Mammary epithelial cell (primary cell): ENCODE measurements at regions of chr19 and their contacts with region 1.

Region 1: DNA sequence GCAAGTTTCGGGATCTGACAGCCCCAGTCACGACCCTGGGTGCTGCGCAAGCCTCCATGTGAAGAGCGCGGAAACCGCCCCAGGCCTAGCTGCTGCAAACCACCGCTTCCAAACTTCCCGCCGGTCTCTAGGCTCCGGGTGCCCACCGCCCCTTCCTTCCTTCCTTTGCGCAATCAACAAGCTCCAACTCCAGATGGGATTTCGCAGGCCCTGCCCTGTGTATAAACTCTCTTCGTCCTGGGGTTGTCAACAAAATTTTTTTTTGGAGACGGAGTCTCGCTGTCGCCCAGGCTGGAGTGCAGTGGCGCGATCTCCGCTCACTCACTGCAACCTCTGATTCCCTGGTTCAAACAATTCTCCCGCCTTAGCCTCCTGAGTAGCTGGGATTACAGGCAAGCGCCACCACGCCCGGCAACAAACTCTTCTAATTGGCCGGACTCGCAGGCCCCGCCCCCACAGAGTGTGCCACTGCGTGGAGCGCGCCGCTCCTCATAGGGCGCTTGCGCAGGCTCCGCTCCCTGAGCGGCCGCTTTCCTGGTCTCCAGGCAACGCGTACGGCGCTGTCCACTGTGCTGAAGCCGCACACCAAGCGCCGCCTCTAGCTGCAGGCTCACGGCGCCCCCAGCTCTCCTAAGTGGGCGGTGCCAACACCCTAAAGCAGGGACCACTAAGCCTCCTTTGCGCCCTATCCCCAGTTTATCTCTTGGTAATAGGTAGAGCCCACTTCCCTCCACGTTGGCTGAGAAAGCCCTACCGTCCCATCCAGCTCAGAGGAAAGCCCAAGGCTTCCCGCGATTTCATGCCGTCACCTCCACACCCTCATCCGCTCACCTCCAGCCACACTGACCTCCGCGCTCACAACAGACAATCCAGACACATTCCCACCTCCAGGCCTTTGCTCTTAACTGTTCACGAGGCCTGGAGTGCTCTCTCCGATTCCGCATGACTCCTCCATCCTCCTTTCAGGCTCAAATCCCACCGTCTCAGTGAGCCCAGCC is 5.5 kb upstream of the QTRT1 start:
- DNase-seq: peak; percentile 93
- H3K4me3 ChIP-seq: no peak overlapping the region
- H3K27ac ChIP-seq: no peak overlapping the region
- H3K4me1 ChIP-seq: no peaks in the 10 kb centered on the region
- H3K27me3 ChIP-seq: no peaks in the 10 kb centered on the region
- CTCF ChIP-seq: no peak

Region 2: DNA sequence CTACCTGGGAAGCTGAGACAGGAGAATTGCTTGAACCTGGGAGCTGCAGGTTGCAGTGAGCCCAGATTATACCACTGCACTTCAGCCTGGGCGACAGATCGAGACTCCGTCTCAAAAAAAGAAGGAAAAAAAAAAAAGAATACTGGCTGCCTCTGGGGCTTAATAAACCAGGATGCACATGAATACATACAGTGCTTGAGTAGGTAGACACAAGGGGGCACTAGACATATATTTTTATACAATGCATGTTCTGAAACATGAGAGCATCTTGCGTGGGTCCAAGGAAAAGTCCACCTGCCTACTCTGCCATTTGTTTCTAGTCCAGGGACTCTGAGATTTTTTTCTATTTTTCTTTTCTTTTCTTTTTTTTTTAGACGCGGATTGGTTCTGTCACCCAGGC is 223.8 kb before region 1 on chr19:
- CTCF ChIA-PET with region 1: no interaction called
- dilution Hi-C with region 1: no loop called
- in situ Hi-C with region 1: no loop called
- intact Hi-C with region 1: loop called (anchors 1 kb)
- DNase-seq: peak; percentile 28
- H3K4me3 ChIP-seq: no peak overlapping the region
- H3K27ac ChIP-seq: no peak overlapping the region
- H3K4me1 ChIP-seq: no peaks in the 10 kb centered on the region
- H3K27me3 ChIP-seq: no peaks in the 10 kb centered on the region
- CTCF ChIP-seq: peak; percentile 44 to 50

Region 3: GRCh38 chr19:10565567-10566407 is 129.9 kb before region 1 on chr19 and contains the start of gene KRI1:
- CTCF ChIA-PET with region 1: interaction called, 4 read pairs
- dilution Hi-C with region 1: no loop called
- in situ Hi-C with region 1: no loop called
- intact Hi-C with region 1: loop called (anchors 1 kb)
- DNase-seq: peak; percentile 94
- H3K4me3 ChIP-seq: peak within 1 kb of the TSS; percentile 90 to 95 (median 92)
- H3K27ac ChIP-seq: peak within 1 kb of the TSS; percentile 53
- H3K4me1 ChIP-seq: peaks cover 39% of the 10 kb centered on the region
- H3K27me3 ChIP-seq: no peaks in the 10 kb centered on the region
- CTCF ChIP-seq: peak; percentile 16 to 42
- total RNA-seq, gene KRI1: 10.3 to 32.7 TPM

Region 4: DNA sequence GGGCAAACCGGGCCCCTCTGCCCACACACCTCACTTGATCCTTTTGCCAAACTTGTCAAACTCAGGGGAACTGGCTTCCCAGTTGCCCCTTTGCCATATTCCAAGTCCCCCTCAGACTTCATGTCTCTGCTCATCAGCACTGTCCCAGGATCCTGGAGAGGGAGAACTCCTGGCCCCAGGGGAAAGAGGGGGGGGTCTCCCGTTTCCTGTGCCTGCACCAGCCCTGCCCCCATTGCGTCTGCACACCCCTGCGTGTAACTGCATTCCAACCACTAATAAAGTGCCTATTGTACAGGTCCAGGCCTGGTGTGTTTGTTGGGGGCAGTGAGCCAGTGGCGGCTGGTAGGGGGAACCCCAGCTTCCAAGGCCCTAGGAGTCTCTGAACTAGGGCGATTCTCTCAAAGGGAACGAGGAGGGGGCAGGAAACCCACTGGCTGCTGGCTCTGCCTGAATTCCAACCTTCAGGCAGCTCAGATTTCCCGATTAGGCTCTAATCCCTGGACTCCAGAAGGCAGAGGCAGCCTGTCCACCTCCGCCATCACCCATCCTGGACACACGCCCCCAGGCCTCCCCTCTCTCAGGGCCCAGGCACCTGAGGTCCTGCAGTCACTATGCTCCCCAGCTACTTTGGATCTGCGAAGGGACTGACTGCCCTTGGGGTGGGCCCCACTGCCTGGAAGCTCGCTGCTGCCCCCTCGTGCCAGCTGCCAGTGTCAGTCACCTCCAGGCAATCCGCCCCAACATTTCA is 51.3 kb before region 1 on chr19:
- CTCF ChIA-PET with region 1: interaction called, 20 read pairs
- dilution Hi-C with region 1: loop called (anchors 5 kb)
- in situ Hi-C with region 1: no loop called
- intact Hi-C with region 1: no loop called
- DNase-seq: peak; percentile 59
- H3K4me3 ChIP-seq: no peak overlapping the region
- H3K27ac ChIP-seq: no peak overlapping the region
- H3K4me1 ChIP-seq: peaks cover 14% of the 10 kb centered on the region
- H3K27me3 ChIP-seq: no peaks in the 10 kb centered on the region
- CTCF ChIP-seq: peak; percentile 81 to 91

Region 5: GRCh38 chr19:10717356-10718204 is 21.9 kb after region 1 on chr19 and contains the start of gene DNM2:
- CTCF ChIA-PET with region 1: interaction called, 16 read pairs
- dilution Hi-C with region 1: no loop called
- in situ Hi-C with region 1: no loop called
- intact Hi-C with region 1: no loop called
- DNase-seq: peak; percentile 100
- H3K4me3 ChIP-seq: peak within 1 kb of the TSS; percentile 63 to 99 (median 97)
- H3K27ac ChIP-seq: peak within 1 kb of the TSS; percentile 31
- H3K4me1 ChIP-seq: peaks cover 12% of the 10 kb centered on the region
- H3K27me3 ChIP-seq: no peaks in the 10 kb centered on the region
- CTCF ChIP-seq: peak; percentile 82 to 88
- total RNA-seq, gene DNM2: 95.9 to 125 TPM

Region 6: DNA sequence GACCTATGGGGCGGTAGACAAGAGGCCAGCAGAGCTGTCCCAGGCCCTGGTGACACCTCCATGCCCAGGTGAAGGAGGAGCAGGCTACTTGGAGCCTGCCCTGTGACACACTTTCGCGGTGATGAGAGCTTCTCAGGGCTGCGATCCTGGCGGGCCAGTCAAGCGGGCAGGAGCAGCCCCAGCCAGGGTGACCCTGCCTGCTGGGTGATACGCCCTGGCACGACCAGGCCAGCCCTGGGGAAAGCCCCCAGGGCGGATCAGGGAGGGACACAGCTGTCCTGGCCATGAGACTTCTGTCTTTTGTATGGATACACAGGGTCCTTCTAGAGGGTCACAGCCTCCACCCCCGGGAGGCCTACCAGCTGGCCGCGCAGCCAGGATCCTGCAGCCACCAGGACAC is 35.2 kb after region 1 on chr19:
- CTCF ChIA-PET with region 1: no interaction called
- dilution Hi-C with region 1: no loop called
- in situ Hi-C with region 1: no loop called
- intact Hi-C with region 1: no loop called
- DNase-seq: no peak
- H3K4me3 ChIP-seq: no peak overlapping the region
- H3K27ac ChIP-seq: no peak overlapping the region
- H3K4me1 ChIP-seq: no peaks in the 10 kb centered on the region
- H3K27me3 ChIP-seq: no peaks in the 10 kb centered on the region
- CTCF ChIP-seq: no peak

Region 7: DNA sequence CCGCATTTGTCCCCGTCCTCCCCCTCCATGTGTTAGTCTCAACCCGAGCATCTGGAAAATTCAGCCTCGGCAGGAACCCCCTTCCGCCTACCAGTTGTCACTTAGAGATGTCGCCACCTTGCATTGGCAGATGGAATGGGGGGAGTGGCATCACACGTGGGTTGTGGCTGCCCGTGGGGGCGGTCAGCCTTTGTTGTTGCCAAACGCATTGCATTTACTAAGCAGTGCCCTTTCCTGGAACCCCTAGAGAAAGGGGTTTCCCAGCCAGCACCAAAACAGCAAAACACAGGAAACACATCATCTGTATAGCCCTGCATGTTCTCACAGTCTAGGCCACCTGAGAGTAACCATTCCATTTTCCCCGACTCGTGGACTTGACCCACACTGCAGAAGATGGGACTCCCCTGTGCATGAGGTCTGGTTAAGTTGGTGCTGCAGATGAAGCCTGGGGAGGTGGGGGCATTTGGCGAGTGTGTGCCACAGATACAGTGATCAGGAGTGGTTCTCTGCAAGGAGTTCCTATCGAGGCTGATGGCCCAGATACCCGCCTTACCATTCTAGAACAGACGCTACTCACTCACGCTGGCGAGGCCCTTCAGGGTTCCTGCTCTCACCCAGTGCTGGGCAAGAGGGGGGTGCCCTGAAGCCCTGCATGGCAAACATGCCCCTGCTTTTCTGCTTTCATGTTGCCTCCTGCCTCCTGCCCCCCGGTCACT is 102.0 kb after region 1 on chr19:
- CTCF ChIA-PET with region 1: no interaction called
- dilution Hi-C with region 1: no loop called
- in situ Hi-C with region 1: no loop called
- intact Hi-C with region 1: no loop called
- DNase-seq: no peak
- H3K4me3 ChIP-seq: no peak overlapping the region
- H3K27ac ChIP-seq: no peak overlapping the region
- H3K4me1 ChIP-seq: no peaks in the 10 kb centered on the region
- H3K27me3 ChIP-seq: no peaks in the 10 kb centered on the region
- CTCF ChIP-seq: no peak

Region 8: GRCh38 chr19:10820173-10820572 is 124.5 kb after region 1 on chr19:
- CTCF ChIA-PET with region 1: no interaction called
- dilution Hi-C with region 1: no loop called
- in situ Hi-C with region 1: no loop called
- intact Hi-C with region 1: no loop called
- DNase-seq: no peak
- H3K4me3 ChIP-seq: no peak overlapping the region
- H3K27ac ChIP-seq: no peak overlapping the region
- H3K4me1 ChIP-seq: no peaks in the 10 kb centered on the region
- H3K27me3 ChIP-seq: no peaks in the 10 kb centered on the region
- CTCF ChIP-seq: peak in 1 of 2 donors; percentile 15